Pancreas (tissue), 10 donors: ENCODE measurements at regions of chr5 and their contacts with region 1.

Region 1: GRCh38 chr5:147628058-147628895 is 118.4 kb upstream of the DPYSL3 start:
- DNase-seq: peak in 3 of 6 donors; percentile 38 to 75 (median 48)
- ATAC-seq: peak; percentile 88 to 99 (median 98)
- H3K4me3 ChIP-seq: no peak overlapping the region
- H3K27ac ChIP-seq: no peak overlapping the region
- H3K4me1 ChIP-seq: peaks cover 0 to 5% (median 0%) of the 10 kb centered on the region in 3 donors
- H3K27me3 ChIP-seq: no peaks in the 10 kb centered on the region
- CTCF ChIP-seq: peak; percentile 35 to 67 (median 58)

Region 2: GRCh38 chr5:147601652-147602051 is 26.6 kb before region 1 on chr5:
- intact Hi-C with region 1: no loop called
- DNase-seq: no peak
- ATAC-seq: no peak
- H3K4me3 ChIP-seq: no peak overlapping the region
- H3K27ac ChIP-seq: no peak overlapping the region
- H3K4me1 ChIP-seq: no peaks in the 10 kb centered on the region
- H3K27me3 ChIP-seq: no peaks in the 10 kb centered on the region
- CTCF ChIP-seq: no peak

Region 3: GRCh38 chr5:147822686-147823491 is 194.6 kb after region 1 on chr5:
- intact Hi-C with region 1: loop called in 2 of 3 experiments (anchors 5 to 10 kb)
- DNase-seq: peak in 1 of 6 donors; percentile 48
- ATAC-seq: peak; percentile 14 to 52 (median 28)
- H3K4me3 ChIP-seq: no peak overlapping the region
- H3K27ac ChIP-seq: peak overlapping the region in 2 of 4 donors; percentile 83 to 86
- H3K4me1 ChIP-seq: peaks cover 0 to 3% (median 0%) of the 10 kb centered on the region in 3 donors
- H3K27me3 ChIP-seq: no peaks in the 10 kb centered on the region
- CTCF ChIP-seq: peak; percentile 38 to 60 (median 58)

Region 4: DNA sequence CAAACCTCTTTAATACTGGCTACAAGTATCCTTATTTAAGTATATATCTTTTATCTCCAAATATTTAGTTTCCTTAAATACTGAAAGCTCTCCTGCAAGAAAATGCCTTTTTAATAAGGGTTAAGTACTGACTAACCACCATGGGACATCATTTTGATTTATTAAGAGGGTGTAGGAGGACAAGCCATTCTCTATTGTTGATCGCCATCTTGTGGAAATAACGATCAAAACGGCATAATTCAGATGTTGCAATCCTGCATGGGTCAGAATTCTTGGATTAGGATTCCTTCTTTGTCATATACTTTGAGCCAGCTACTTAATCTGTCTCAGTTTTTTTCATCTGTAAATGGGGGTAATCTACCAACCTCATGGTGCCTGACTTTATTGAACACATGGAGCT is 306.8 kb after region 1 on chr5:
- intact Hi-C with region 1: loop called in 1 of 3 experiments (anchors 10 kb)
- DNase-seq: peak in 2 of 6 donors; percentile 7 to 36
- ATAC-seq: peak; percentile 79 to 98 (median 95)
- H3K4me3 ChIP-seq: no peak overlapping the region
- H3K27ac ChIP-seq: no peak overlapping the region
- H3K4me1 ChIP-seq: no peaks in the 10 kb centered on the region
- H3K27me3 ChIP-seq: no peaks in the 10 kb centered on the region
- CTCF ChIP-seq: peak in 3 of 4 donors; percentile 15 to 32 (median 32)